ENCODE measurements at regions of chr12 and their contacts with region 1.

Region 1: GRCh38 chr12:52221912-52222457 is 11.1 kb upstream of the KRT7 start:
- DNase-seq: no peak
- ATAC-seq: no peak
- H3K4me3 Mint-ChIP-seq: no peak overlapping the region
- H3K27ac Mint-ChIP-seq: no peak overlapping the region
- H3K4me1 Mint-ChIP-seq: no peaks in the 10 kb centered on the region
- H3K27me3 Mint-ChIP-seq: peaks cover 20% of the 10 kb centered on the region
- CTCF ChIP-seq: no peak

Region 2: GRCh38 chr12:52207895-52208294 is 14.1 kb before region 1 on chr12:
- CTCF ChIA-PET with region 1: no interaction called
- POLR2A ChIA-PET with region 1: no interaction called
- intact Hi-C with region 1: no loop called
- DNase-seq: no peak
- ATAC-seq: no peak
- H3K4me3 Mint-ChIP-seq: no peak overlapping the region
- H3K27ac Mint-ChIP-seq: no peak overlapping the region
- H3K4me1 Mint-ChIP-seq: no peaks in the 10 kb centered on the region
- H3K27me3 Mint-ChIP-seq: peaks cover 18% of the 10 kb centered on the region
- CTCF ChIP-seq: no peak

Region 3: GRCh38 chr12:52278541-52279421 is 56.8 kb after region 1 on chr12:
- CTCF ChIA-PET with region 1: no interaction called
- POLR2A ChIA-PET with region 1: no interaction called
- intact Hi-C with region 1: loop called (anchors 1 kb)
- DNase-seq: peak; percentile 65
- ATAC-seq: peak; percentile 85
- H3K4me3 Mint-ChIP-seq: no peak overlapping the region
- H3K27ac Mint-ChIP-seq: no peak overlapping the region
- H3K4me1 Mint-ChIP-seq: peaks cover 4% of the 10 kb centered on the region
- H3K27me3 Mint-ChIP-seq: peaks cover 55% of the 10 kb centered on the region
- CTCF ChIP-seq: no peak